Prostate gland (tissue), 2 donors: ENCODE measurements at regions of chr10 and their contacts with region 1.

Region 1: GRCh38 chr10:34739915-34740314 is 75.2 kb downstream of the PARD3 start:
- DNase-seq: peak; percentile 36
- H3K4me3 ChIP-seq: no peak overlapping the region
- H3K27ac ChIP-seq: peak overlapping the region in 1 of 2 donors; percentile 4
- H3K4me1 ChIP-seq: peaks cover 7% of the 10 kb centered on the region
- H3K27me3 ChIP-seq: no peaks in the 10 kb centered on the region
- CTCF ChIP-seq: no peak
- POLR2A ChIP-seq: no peak

Region 2: GRCh38 chr10:34776090-34776690 is 36.3 kb after region 1 on chr10:
- intact Hi-C with region 1: loop called (anchors 5 kb)
- DNase-seq: no peak
- H3K4me3 ChIP-seq: no peak overlapping the region
- H3K27ac ChIP-seq: no peak overlapping the region
- H3K4me1 ChIP-seq: no peaks in the 10 kb centered on the region
- H3K27me3 ChIP-seq: no peaks in the 10 kb centered on the region
- CTCF ChIP-seq: no peak
- POLR2A ChIP-seq: no peak

Region 3: GRCh38 chr10:34933676-34934075 is 193.8 kb after region 1 on chr10:
- intact Hi-C with region 1: loop called (anchors 10 kb)
- DNase-seq: peak; percentile 53
- H3K4me3 ChIP-seq: no peak overlapping the region
- H3K27ac ChIP-seq: peak overlapping the region in 1 of 2 donors; percentile 55
- H3K4me1 ChIP-seq: no peaks in the 10 kb centered on the region
- H3K27me3 ChIP-seq: no peaks in the 10 kb centered on the region
- CTCF ChIP-seq: no peak
- POLR2A ChIP-seq: no peak